IMR-90 (cell line): ENCODE measurements at regions of chr12 and their contacts with region 1.

Region 1: GRCh38 chr12:64403707-64404469 is at the start of gene XPOT:
- DNase-seq: peak; percentile 98
- ATAC-seq: peak; percentile 90
- H3K4me3 ChIP-seq: peak within 1 kb of the TSS; percentile 77
- H3K27ac ChIP-seq: peak within 1 kb of the TSS; percentile 97
- H3K4me1 ChIP-seq: peaks cover 5% of the 10 kb centered on the region
- H3K27me3 ChIP-seq: no peaks in the 10 kb centered on the region
- CTCF ChIP-seq: no peak
- POLR2A ChIP-seq: 0 out of 2 replicates have a peak, but pooled peaks have one; percentile 13
- RAD21 ChIP-seq: no peak
- total RNA-seq, gene XPOT: 79.4 and 80.8 TPM in 2 replicates

Region 2: GRCh38 chr12:64186789-64187188 is 217.1 kb before region 1 on chr12:
- CTCF ChIA-PET with region 1: no interaction called
- POLR2A ChIA-PET with region 1: no interaction called
- dilution Hi-C with region 1: no loop called
- in situ Hi-C with region 1: no loop called
- intact Hi-C with region 1: loop called (anchors 5 kb)
- DNase-seq: peak; percentile 47
- ATAC-seq: peak; percentile 15; the same call in 1 of the 2 replicates
- H3K4me3 ChIP-seq: no peak overlapping the region
- H3K27ac ChIP-seq: peak overlapping the region; percentile 100
- H3K4me1 ChIP-seq: peaks cover 21% of the 10 kb centered on the region
- H3K27me3 ChIP-seq: no peaks in the 10 kb centered on the region
- CTCF ChIP-seq: no peak
- POLR2A ChIP-seq: no peak
- RAD21 ChIP-seq: no peak